Right ventricle myocardium inferior (tissue), 1 donor: ENCODE measurements at regions of chr9 and their contacts with region 1.

Region 1: GRCh38 chr9:13915591-13916326 is 398.2 kb downstream of the NFIB start:
- DNase-seq: no peak
- ATAC-seq: peak; percentile 61

Region 2: GRCh38 chr9:13688994-13689600 is 226.7 kb before region 1 on chr9:
- intact Hi-C with region 1: loop called (anchors 10 kb)
- DNase-seq: no peak
- ATAC-seq: no peak

Region 3: GRCh38 chr9:13841746-13842462 is 73.9 kb before region 1 on chr9:
- intact Hi-C with region 1: loop called (anchors 10 kb)
- DNase-seq: peak; percentile 49
- ATAC-seq: peak; percentile 92

Region 4: GRCh38 chr9:13878241-13878711 is 37.5 kb before region 1 on chr9:
- intact Hi-C with region 1: no loop called
- DNase-seq: no peak
- ATAC-seq: no peak

Region 5: DNA sequence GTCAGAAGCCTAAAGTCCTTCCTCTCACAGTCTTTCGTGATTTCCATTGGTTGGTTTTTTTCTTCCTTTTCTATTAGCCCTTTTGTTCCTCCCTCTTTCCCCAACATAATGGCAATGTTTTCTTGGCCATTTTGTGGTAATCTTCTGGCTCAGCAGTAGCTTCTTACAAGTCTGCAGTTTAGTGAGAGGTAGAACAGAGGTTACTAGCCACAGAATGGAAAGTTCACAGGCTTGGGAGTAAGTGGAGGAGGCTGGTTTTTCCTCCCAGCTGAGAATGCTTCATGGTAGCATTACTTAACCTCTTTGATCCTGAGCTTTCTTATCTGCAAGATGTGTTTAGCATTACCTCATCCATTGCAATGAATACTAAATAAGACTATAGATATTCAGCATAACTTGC is 51.3 kb after region 1 on chr9:
- intact Hi-C with region 1: loop called (anchors 5 kb)
- DNase-seq: no peak
- ATAC-seq: no peak